ENCODE measurements at regions of chr1 and their contacts with region 1.

Region 1: GRCh38 chr1:58783993-58784757 is at the start of gene JUN:
- DNase-seq: peak; percentile 100
- H3K4me3 ChIP-seq: peak within 1 kb of the TSS; percentile 77 to 87 (median 80)
- H3K27ac ChIP-seq: peak within 1 kb of the TSS; percentile 97 to 100 (median 98)
- H3K4me1 ChIP-seq: peaks cover 0 to 27% (median 21%) of the 10 kb centered on the region in 4 donors
- H3K27me3 ChIP-seq: no peaks in the 10 kb centered on the region
- CTCF ChIP-seq: peak in 1 of 4 experiments; percentile 10
- EP300 ChIP-seq: peak in 2 of 4 donors; percentile 15 to 94
- POLR2A ChIP-seq: peak; percentile 75 to 93
- total RNA-seq, gene JUN: 52.4 to 233 (median 202) TPM

Region 2: DNA sequence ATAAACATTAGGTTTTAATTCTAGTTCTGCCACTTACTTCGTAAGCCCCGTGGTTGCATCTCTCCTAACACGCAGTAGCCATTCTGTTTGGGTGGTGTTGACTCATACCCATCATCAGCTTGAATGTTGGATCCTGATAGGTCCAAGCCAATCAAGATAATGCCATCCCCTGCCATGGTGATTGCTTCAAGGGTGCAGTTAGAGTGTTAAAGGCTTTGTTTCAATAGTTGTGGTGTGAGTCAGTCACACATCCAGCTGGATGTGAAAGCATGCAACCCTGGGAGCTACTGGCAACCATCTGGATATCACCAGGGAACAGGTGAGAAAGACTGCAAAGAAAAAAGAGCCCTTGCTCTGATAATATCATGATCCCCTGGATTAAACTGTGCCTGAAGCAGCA is 306.8 kb before region 1 on chr1:
- intact Hi-C with region 1: no loop called
- DNase-seq: no peak
- H3K4me3 ChIP-seq: no peak overlapping the region
- H3K27ac ChIP-seq: no peak overlapping the region
- H3K4me1 ChIP-seq: no peaks in the 10 kb centered on the region
- H3K27me3 ChIP-seq: no peaks in the 10 kb centered on the region
- CTCF ChIP-seq: no peak
- EP300 ChIP-seq: no peak
- POLR2A ChIP-seq: no peak

Region 3: DNA sequence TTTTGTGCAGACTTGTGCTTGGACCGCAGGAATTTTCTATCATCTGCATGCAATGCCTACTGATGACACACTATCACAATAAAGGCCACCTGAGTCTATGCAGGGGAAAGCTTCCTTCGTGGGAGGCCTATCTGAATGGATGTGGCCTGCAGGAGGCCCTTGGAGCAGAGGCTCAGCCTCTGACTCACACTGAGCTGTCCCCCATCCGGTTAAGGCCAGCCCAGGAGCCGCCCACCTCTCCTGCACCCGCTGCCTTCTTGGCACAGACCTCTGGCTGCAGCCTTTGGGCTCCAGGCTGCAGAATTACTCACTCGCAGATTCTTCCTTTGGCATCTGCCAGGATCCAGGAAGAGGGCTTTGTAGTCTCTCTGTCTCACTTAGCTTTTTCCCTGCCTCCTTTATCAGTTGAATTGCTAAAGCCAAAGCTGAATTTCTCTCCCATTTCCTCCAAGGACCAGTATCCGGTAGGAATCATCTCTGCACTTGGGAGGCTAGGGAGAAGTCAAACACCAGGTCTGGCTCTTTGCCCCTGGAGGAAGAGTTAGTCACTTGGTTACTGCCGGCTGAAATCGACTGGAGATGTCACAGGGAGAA is 64.7 kb after region 1 on chr1:
- intact Hi-C with region 1: no loop called
- DNase-seq: peak; percentile 74
- H3K4me3 ChIP-seq: no peak overlapping the region
- H3K27ac ChIP-seq: peak overlapping the region; percentile 10 to 60 (median 48)
- H3K4me1 ChIP-seq: peaks cover 0 to 13% (median 10%) of the 10 kb centered on the region in 4 donors
- H3K27me3 ChIP-seq: no peaks in the 10 kb centered on the region
- CTCF ChIP-seq: no peak
- EP300 ChIP-seq: no peak
- POLR2A ChIP-seq: no peak

Region 4: DNA sequence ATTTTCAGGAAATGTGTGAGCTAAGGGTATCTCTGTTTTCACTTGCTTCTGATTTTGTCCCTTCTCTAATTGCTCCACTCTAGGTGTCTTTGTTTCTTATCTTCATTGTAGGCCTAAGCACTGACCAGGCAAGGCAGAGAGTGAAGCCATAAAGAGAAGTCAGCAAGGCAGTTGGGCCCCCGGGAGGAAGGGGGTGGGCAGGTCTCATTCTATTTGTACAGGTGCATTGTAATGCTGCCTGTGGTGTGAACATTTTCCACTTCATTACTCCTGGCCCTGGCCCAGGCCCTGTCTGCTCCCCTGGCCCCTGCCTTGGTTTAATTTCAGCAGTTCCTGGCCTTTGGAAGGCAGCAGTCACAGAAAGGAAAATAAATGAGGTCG is 86.1 kb after region 1 on chr1:
- intact Hi-C with region 1: no loop called
- DNase-seq: no peak
- H3K4me3 ChIP-seq: no peak overlapping the region
- H3K27ac ChIP-seq: no peak overlapping the region
- H3K4me1 ChIP-seq: peaks cover 0 to 17% (median 14%) of the 10 kb centered on the region in 4 donors
- H3K27me3 ChIP-seq: no peaks in the 10 kb centered on the region
- CTCF ChIP-seq: no peak
- EP300 ChIP-seq: no peak
- POLR2A ChIP-seq: no peak

Region 5: DNA sequence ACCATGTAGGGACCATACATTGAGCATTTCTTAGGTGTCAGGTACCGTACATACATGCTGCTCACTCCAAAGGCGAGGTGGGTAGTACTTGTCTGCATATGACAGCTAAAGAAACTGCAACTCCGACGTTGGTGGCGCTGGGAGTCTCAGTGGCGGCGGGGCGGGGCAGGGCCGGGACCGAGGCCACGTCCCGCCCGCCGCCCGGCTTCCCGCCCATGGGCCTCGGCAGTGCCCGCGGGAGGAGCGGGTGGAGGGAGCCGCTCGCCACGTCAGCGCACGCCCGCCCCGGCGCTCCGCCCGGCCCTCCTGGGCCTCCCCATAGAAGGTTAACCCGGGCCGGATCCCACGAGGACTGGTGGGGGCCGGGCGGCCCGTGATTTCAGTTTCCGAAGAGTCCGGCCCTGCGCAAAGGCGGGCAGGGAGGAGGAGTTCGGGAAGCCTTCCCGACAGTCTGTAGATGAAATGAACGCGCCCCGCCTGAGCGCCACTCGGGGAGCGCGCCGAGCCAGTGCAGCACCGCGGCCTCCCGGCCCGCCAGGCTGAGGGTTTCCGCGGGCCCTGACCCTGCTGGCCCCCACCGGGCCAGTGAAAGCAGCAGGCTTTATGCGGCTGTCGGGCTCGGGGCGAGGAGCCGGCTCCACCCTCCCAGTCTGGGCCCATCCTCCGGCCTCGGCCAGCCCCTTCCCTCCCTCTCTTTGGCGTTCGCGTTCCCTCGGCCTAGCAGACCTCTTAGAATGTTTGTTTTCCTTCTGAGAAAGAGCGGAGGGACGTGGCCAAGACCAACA is 119.5 kb after region 1 on chr1:
- intact Hi-C with region 1: loop called (anchors 1 kb)
- DNase-seq: peak; percentile 98
- H3K4me3 ChIP-seq: peak overlapping the region; percentile 38 to 56 (median 53)
- H3K27ac ChIP-seq: peak overlapping the region; percentile 93 to 96 (median 96)
- H3K4me1 ChIP-seq: peaks cover 0 to 46% (median 26%) of the 10 kb centered on the region in 4 donors
- H3K27me3 ChIP-seq: no peaks in the 10 kb centered on the region
- CTCF ChIP-seq: no peak
- EP300 ChIP-seq: peak in 3 of 4 donors; percentile 42 to 84 (median 72)
- POLR2A ChIP-seq: peak; percentile 85 to 88

Region 6: GRCh38 chr1:59057211-59057694 is 273.1 kb after region 1 on chr1:
- intact Hi-C with region 1: loop called (anchors 5 kb)
- DNase-seq: peak; percentile 92
- H3K4me3 ChIP-seq: no peak overlapping the region
- H3K27ac ChIP-seq: peak overlapping the region; percentile 43 to 68 (median 58)
- H3K4me1 ChIP-seq: peaks cover 0 to 51% (median 29%) of the 10 kb centered on the region in 4 donors
- H3K27me3 ChIP-seq: no peaks in the 10 kb centered on the region
- CTCF ChIP-seq: no peak
- EP300 ChIP-seq: peak in 3 of 4 donors; percentile 36 to 89 (median 61)
- POLR2A ChIP-seq: no peak

Region 7: GRCh38 chr1:59150577-59151391 is 366.6 kb after region 1 on chr1:
- intact Hi-C with region 1: loop called (anchors 2 kb)
- DNase-seq: peak; percentile 96
- H3K4me3 ChIP-seq: peak overlapping the region in 2 of 4 donors; percentile 24 to 30
- H3K27ac ChIP-seq: peak overlapping the region; percentile 77 to 87 (median 82)
- H3K4me1 ChIP-seq: peaks cover 0 to 35% (median 29%) of the 10 kb centered on the region in 4 donors
- H3K27me3 ChIP-seq: no peaks in the 10 kb centered on the region
- CTCF ChIP-seq: no peak
- EP300 ChIP-seq: peak; percentile 23 to 87 (median 79)
- POLR2A ChIP-seq: no peak

Region 8: GRCh38 chr1:59393211-59394180 is 609.3 kb after region 1 on chr1:
- intact Hi-C with region 1: loop called (anchors 2 kb)
- DNase-seq: peak; percentile 95
- H3K4me3 ChIP-seq: no peak overlapping the region
- H3K27ac ChIP-seq: peak overlapping the region; percentile 78 to 88 (median 88)
- H3K4me1 ChIP-seq: peaks cover 0 to 37% (median 30%) of the 10 kb centered on the region in 4 donors
- H3K27me3 ChIP-seq: no peaks in the 10 kb centered on the region
- CTCF ChIP-seq: no peak
- EP300 ChIP-seq: peak in 3 of 4 donors; percentile 14 to 36 (median 16)
- POLR2A ChIP-seq: no peak

Region 9: GRCh38 chr1:59596441-59596861 is 812.3 kb after region 1 on chr1:
- intact Hi-C with region 1: loop called (anchors 5 kb)
- DNase-seq: no peak
- H3K4me3 ChIP-seq: no peak overlapping the region
- H3K27ac ChIP-seq: peak overlapping the region; percentile 82 to 87 (median 82)
- H3K4me1 ChIP-seq: peaks cover 0 to 81% (median 61%) of the 10 kb centered on the region in 4 donors
- H3K27me3 ChIP-seq: no peaks in the 10 kb centered on the region
- CTCF ChIP-seq: no peak
- EP300 ChIP-seq: no peak
- POLR2A ChIP-seq: no peak

Region 10: DNA sequence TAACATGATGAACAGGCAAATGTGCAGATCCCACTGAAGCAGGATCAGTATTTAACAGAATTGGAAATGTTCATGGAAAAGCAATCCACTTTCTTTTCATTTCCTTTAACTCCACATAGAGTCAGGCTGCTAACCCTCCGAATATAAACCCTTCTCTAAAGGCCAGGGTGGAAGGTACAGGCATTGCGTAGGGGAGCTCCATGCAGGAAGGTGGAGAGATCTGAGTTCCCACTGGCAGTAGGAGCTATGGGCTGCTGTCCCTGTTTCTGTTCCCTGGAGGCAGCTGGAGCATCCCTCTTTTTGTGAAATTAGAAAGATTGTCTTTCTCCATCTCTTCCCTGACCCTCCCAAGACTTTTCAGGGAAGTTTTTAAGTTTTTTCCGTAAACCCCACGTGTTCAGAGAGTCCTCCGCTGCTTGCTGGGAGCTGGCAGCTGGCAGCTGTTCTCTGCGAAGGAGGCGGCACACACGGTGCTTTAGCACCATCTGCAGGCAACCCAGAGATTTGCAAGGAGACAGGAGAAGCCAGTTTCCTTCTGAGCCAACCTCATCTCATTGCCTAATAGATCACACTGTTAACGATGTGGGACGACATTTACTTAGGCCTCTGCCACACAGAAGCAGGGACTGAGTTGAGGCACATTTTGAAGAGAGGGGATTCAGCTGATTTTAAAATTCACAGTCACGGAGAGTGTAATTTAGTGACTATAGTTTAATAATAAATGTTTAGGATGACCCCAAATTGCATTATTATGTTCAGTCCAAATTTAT is 975.2 kb after region 1 on chr1:
- intact Hi-C with region 1: loop called (anchors 5 kb)
- DNase-seq: peak; percentile 94
- H3K4me3 ChIP-seq: peak overlapping the region in 3 of 4 donors; percentile 23 to 34 (median 29)
- H3K27ac ChIP-seq: peak overlapping the region; percentile 36 to 76 (median 72)
- H3K4me1 ChIP-seq: peaks cover 0 to 33% (median 15%) of the 10 kb centered on the region in 4 donors
- H3K27me3 ChIP-seq: no peaks in the 10 kb centered on the region
- CTCF ChIP-seq: peak; percentile 92 to 98 (median 96)
- EP300 ChIP-seq: no peak
- POLR2A ChIP-seq: no peak

Measured in sigmoid colon (tissue), 7 donors.